Right ventricle myocardium inferior (tissue), 1 donor: ENCODE measurements at regions of chr11 and their contacts with region 1.

Region 1: GRCh38 chr11:8225589-8226036 is 38.1 kb downstream of the LMO1 start:
- DNase-seq: peak; percentile 79
- ATAC-seq: peak; percentile 47

Region 2: DNA sequence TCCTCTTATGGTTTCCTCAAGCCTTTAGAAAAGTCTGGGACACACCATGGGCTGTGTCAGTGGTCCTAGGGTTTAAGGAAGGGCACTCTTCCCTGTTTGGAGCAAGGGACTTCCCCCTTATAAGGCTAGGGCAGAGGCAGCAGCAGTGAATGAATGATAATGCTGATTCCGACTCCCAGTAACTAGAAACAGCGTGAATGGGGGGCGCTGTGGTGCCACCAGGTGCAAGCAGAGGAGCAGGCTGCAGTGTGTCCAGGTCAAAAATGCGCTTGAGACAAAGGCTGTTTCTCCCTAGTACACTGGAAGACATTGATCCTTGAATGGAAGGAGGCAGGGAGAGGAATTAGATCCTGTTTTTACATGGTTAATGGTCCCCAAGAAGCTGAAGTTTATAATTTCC is 45.1 kb before region 1 on chr11:
- intact Hi-C with region 1: no loop called
- DNase-seq: no peak
- ATAC-seq: no peak

Region 3: GRCh38 chr11:8263769-8264410 is 38.3 kb after region 1 on chr11 and contains the start of gene LMO1:
- intact Hi-C with region 1: loop called (anchors 1 kb)
- DNase-seq: peak; percentile 86
- ATAC-seq: peak; percentile 71
- total RNA-seq, gene LMO1: 3.6 TPM

Region 4: GRCh38 chr11:8318336-8318935 is 92.8 kb after region 1 on chr11:
- intact Hi-C with region 1: loop called (anchors 10 kb)
- DNase-seq: no peak
- ATAC-seq: no peak

Region 5: DNA sequence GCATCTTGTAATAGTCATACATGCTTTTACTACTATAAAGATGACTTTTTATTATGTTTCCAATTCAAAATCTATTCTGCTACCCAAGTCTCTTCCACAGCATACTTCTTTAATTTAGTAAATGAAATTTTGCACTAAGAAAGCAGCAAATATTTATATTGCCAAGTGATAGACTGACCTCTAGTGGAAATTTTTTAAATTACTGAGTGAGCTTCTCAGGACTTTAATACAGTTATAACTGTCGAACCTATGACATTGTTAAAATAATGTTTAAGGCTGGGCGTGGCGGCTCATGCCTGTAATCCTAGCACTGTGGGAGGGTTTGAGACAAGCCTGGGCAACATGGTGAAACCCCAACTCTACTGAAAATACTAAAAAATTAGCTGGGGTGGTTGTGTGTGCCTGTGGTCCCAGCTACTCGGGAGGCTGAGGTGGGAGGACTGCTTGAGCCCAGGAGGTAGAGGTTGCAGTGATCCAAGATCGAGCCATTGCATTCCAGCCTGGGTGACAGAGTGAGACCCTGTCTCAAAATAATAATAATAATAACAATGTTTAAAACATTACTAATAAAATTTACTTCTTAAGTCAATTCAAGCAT is 341.1 kb after region 1 on chr11:
- intact Hi-C with region 1: loop called (anchors 1 kb)
- DNase-seq: no peak
- ATAC-seq: peak; percentile 48